Posterior cingulate gyrus (tissue), 11 donors: ENCODE measurements at regions of chr6 and their contacts with region 1.

Region 1: GRCh38 chr6:81752138-81752920 is at the start of gene TENT5A:
- DNase-seq: peak; percentile 56 to 94 (median 67)

Region 2: GRCh38 chr6:80338201-80338836 is 1414.0 kb before region 1 on chr6:
- intact Hi-C with region 1: loop called (anchors 10 kb)
- DNase-seq: peak in 6 of 10 donors; percentile 28 to 72 (median 42)

Region 3: DNA sequence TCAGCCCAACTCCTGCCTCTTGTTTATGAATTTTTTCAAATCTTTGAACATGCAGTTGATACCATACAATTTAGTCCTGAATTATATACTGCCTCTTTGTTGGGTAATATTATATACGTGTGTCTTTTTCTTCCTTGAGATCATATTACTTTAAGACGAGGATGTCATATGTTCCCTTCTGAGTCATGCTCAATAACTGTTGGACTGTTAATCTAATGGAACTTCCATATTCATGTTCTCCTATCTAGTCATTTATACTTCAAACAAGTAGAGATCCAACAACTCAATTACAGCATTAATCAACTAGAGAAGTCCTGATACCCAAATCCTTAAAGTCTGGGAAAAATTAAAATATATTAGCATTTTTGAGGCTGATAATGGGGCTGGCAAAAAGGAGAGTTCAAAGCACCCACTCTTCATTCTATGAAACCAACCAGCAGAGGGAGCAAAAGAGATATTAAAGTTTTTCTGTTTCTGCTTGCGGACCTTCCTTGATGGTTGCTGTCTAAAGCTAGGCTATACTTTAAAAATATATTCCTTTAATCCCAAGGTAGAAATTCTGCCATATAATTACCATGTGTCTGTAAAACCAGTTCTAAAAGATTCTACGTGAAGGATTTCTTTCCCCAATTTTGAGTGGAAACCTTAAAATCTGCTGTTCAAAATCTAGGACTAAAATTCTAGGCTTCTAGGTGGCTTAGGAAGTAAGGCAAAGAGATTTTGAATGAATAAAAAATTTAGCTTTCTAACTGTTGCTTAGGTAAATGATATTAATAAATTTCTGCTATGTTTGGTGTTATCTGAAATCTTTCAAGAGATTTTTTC is 1147.0 kb before region 1 on chr6:
- intact Hi-C with region 1: loop called (anchors 10 kb)
- DNase-seq: no peak

Region 4: DNA sequence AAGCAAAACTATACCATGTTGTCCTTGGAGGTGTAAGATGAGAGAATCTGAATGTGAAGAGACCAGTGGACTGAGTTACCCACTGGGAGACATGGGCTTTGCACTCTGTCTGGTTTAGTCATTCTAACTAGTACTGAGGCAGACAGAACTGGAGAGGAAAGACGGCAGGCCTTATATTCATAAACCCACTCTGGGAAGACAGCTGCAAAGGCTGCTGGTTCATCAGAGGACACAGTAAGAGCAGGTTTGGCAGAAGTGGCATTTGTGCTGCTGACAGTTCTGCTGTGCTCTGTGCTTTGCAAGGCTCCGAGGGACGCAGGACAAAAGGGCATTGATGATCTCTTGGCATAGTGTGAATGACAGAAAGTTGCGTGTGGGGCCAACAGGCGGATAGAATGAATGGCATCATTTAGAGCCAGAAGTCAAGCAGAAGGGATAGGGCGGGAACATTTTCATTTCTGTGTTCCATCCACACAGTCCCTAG is 142.5 kb after region 1 on chr6:
- intact Hi-C with region 1: loop called (anchors 10 kb)
- DNase-seq: peak; percentile 55 to 97 (median 77)